ENCODE measurements at regions of chr18 and their contacts with region 1.

Region 1: GRCh38 chr18:12391618-12392165 is 14.7 kb upstream of the AFG3L2 start:
- DNase-seq: no peak
- ATAC-seq: peak; percentile 90 to 93
- H3K4me3 ChIP-seq: no peak overlapping the region
- H3K27ac ChIP-seq: no peak overlapping the region
- H3K4me1 ChIP-seq: no peaks in the 10 kb centered on the region
- H3K27me3 ChIP-seq: no peaks in the 10 kb centered on the region
- CTCF ChIP-seq: peak; percentile 94

Region 2: GRCh38 chr18:12005538-12006487 is 385.9 kb before region 1 on chr18:
- intact Hi-C with region 1: no loop called
- DNase-seq: no peak
- ATAC-seq: no peak
- H3K4me3 ChIP-seq: no peak overlapping the region
- H3K27ac ChIP-seq: no peak overlapping the region
- H3K4me1 ChIP-seq: peaks cover 7% of the 10 kb centered on the region
- H3K27me3 ChIP-seq: no peaks in the 10 kb centered on the region
- CTCF ChIP-seq: no peak

Region 3: DNA sequence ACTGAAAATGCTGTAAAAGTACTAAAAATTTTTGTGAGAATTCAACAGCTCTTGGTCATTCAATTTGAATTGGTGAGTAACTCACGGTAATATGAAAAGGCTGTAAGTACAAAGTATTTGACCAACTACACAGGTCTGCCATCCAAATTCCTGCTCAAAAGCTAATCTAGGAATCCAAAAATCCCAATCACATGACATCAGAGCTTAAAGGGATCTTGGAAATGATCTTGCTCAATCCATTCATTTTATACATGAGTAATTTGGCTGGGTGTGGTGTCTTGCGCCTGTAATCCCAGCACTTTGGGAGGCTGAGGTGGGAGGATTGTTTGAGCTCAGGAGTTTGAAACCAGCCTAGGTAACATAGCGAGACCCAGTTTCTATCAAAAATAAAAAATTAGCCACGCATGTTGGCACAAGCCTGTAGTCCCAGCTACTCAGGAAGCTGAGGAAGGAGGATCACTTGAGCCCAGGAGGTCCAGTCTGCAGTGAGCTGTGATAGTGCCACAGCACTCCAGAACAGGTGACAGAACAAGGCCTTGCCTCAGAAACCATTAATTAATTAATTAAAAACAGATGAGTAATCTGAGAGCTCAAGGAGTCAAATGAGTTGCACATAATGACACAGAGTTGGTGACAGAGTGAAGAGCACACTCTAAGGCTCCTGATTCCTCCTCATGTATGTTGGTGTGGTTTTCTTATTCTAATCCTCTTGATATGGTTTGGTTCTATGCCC is 246.4 kb after region 1 on chr18:
- intact Hi-C with region 1: no loop called
- DNase-seq: no peak
- ATAC-seq: peak in 1 of 2 donors; percentile 35
- H3K4me3 ChIP-seq: no peak overlapping the region
- H3K27ac ChIP-seq: no peak overlapping the region
- H3K4me1 ChIP-seq: peaks cover 5% of the 10 kb centered on the region
- H3K27me3 ChIP-seq: no peaks in the 10 kb centered on the region
- CTCF ChIP-seq: no peak

Region 4: GRCh38 chr18:12679183-12679786 is 287.6 kb after region 1 on chr18:
- intact Hi-C with region 1: loop called (anchors 10 kb)
- DNase-seq: peak; percentile 63
- ATAC-seq: peak; percentile 94 to 98
- H3K4me3 ChIP-seq: peak overlapping the region; percentile 33
- H3K27ac ChIP-seq: peak overlapping the region; percentile 83
- H3K4me1 ChIP-seq: peaks cover 16% of the 10 kb centered on the region
- H3K27me3 ChIP-seq: no peaks in the 10 kb centered on the region
- CTCF ChIP-seq: no peak